HCT116 (cell line): ENCODE measurements at regions of chr17 and their contacts with region 1.

Region 1: GRCh38 chr17:50478391-50479381 is at the start of gene RSAD1:
- DNase-seq: peak; percentile 87
- ATAC-seq: peak; percentile 81
- H3K4me3 ChIP-seq: peak within 1 kb of the TSS; percentile 78 to 91
- H3K27ac ChIP-seq: peak within 1 kb of the TSS; percentile 77
- H3K4me1 ChIP-seq: peaks cover 21 to 42% of the 10 kb centered on the region in 2 experiments
- H3K27me3 ChIP-seq: no peaks in the 10 kb centered on the region
- CTCF ChIP-seq: peak; percentile 91 to 97 (median 95)
- POLR2A ChIP-seq: peak; percentile 82
- RAD21 ChIP-seq: peak; percentile 70
- total RNA-seq, gene RSAD1: 82.7 TPM

Region 2: DNA sequence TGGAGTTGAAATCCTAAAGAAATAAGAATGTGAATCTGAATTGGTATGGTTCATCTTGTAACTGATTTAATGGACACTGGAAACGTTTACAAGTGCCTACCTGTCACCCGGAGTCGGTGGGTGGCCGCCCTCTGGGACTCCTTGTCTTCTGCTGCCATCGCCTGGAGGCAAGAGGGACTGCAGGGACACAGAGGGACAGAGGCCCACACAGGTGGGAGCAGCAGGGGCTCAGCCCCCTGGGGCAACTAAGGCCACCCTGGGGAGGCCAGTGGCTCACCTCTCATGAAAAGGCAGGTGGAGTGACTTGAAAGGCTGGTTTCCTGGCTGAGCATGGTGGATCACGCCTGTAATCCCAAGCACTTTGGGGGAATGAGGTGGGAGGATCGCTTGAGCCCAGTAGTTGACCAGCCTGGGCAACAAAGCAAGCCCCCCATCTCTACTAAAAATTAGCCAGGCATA is 181.2 kb before region 1 on chr17:
- CTCF ChIA-PET with region 1: no interaction called
- POLR2A ChIA-PET with region 1: no interaction called
- RAD21 ChIA-PET with region 1: no interaction called
- intact Hi-C with region 1: loop called (anchors 2 kb)
- DNase-seq: peak; percentile 80
- ATAC-seq: peak; percentile 99
- H3K4me3 ChIP-seq: no peak overlapping the region
- H3K27ac ChIP-seq: no peak overlapping the region
- H3K4me1 ChIP-seq: no peaks in the 10 kb centered on the region
- H3K27me3 ChIP-seq: no peaks in the 10 kb centered on the region
- CTCF ChIP-seq: peak; percentile 74 to 99 (median 98)
- POLR2A ChIP-seq: no peak
- RAD21 ChIP-seq: peak; percentile 100

Region 3: DNA sequence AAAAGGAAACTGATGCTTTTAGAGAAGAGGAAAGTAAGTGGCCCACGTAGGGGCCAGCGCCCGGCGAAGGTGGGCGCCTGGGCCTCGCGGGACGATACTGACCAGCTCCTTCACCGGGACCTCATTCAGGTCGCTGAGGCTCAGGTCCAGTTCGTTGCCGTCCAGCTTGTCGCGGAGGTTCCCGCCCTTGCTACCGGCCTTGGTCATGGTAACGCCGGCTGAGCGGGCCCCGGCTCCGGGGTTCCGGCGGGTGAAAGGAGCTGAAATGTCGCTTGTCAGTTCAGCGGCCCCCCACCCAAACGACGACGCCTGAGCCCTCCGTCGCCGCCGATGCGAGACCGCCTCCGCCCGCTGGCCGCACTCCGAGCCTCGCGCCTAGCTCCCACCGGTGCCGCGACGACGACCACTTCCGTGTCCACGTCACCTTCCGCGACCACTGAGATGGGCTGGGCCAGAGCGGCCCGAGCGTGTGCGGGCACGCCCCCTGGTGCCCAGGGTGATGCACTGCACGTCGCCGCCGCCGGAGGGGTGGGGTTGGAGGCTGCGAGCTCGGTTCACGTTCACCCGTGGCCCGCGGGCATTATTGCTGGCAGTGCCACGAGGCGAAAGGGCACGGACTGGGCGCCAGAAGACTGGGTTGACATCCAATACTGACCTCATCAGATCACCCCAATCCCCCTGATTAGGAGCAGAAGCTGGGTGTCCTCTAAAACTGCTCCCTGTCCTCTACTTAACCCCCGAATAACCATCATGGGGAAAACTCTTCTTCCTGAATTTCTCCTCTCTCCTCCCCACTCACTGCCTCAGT is 81.4 kb before region 1 on chr17 and contains the start of gene LRRC59:
- CTCF ChIA-PET with region 1: interaction called, 15 read pairs
- POLR2A ChIA-PET with region 1: interaction called, 9 read pairs
- RAD21 ChIA-PET with region 1: interaction called in 1 of 2 experiments, 3 read pairs
- intact Hi-C with region 1: loop called (anchors 1 kb)
- DNase-seq: peak; percentile 77
- ATAC-seq: peak; percentile 95
- H3K4me3 ChIP-seq: peak within 1 kb of the TSS; percentile 95
- H3K27ac ChIP-seq: peak within 1 kb of the TSS; percentile 77
- H3K4me1 ChIP-seq: peaks cover 7 to 27% of the 10 kb centered on the region in 2 experiments
- H3K27me3 ChIP-seq: no peaks in the 10 kb centered on the region
- CTCF ChIP-seq: peak; percentile 83 to 99 (median 94)
- POLR2A ChIP-seq: peak; percentile 71
- RAD21 ChIP-seq: peak; percentile 39; the same call in 1 of the 2 replicates
- total RNA-seq, gene LRRC59: 221 TPM

Region 4: DNA sequence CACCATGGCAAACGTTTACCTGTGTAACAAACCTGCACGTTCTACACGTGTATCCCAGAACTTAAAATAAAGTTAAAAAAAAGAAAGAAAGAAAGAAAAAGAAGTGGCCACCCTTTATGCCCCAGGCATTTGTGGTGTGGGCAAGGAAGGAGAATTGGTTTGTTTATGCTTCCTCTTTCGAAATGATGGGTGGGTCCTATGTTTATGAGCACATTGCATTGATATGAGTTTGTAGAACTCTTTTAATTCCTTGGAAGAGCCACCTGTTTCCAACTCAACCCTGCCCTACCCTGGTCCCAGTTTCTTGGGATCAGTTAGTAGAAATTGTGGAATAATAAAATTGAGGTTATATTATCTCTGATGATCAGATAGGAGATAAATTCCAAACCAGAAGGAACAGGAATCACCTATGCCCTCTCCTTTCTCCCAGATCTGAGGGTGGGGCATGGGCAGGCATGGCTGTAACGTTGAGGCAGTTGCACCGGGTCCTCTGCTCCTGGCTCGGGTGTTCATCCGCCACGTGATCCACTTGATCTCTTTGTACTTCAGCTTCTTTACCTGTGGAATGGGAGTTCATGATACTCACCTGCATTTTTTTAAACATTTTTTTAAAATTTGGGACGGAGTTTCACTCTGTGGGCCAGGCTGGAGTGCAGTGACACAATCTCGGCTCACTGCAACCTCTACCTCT is 25.9 kb before region 1 on chr17:
- CTCF ChIA-PET with region 1: no interaction called
- POLR2A ChIA-PET with region 1: no interaction called
- RAD21 ChIA-PET with region 1: no interaction called
- intact Hi-C with region 1: no loop called
- DNase-seq: no peak
- ATAC-seq: no peak; the same call in 1 of the 2 replicates
- H3K4me3 ChIP-seq: no peak overlapping the region
- H3K27ac ChIP-seq: no peak overlapping the region
- H3K4me1 ChIP-seq: peaks cover 16 to 34% of the 10 kb centered on the region in 2 experiments
- H3K27me3 ChIP-seq: no peaks in the 10 kb centered on the region
- CTCF ChIP-seq: no peak
- POLR2A ChIP-seq: no peak
- RAD21 ChIP-seq: no peak

Region 5: GRCh38 chr17:50501054-50501453 is 22.4 kb after region 1 on chr17:
- CTCF ChIA-PET with region 1: interaction called, 10 read pairs
- POLR2A ChIA-PET with region 1: no interaction called
- RAD21 ChIA-PET with region 1: interaction called in 1 of 2 experiments, 4 read pairs
- intact Hi-C with region 1: no loop called
- DNase-seq: peak; percentile 50
- ATAC-seq: peak; percentile 31; the same call in 1 of the 2 replicates
- H3K4me3 ChIP-seq: no peak overlapping the region
- H3K27ac ChIP-seq: no peak overlapping the region
- H3K4me1 ChIP-seq: peaks cover 11 to 19% of the 10 kb centered on the region in 2 experiments
- H3K27me3 ChIP-seq: no peaks in the 10 kb centered on the region
- CTCF ChIP-seq: peak; percentile 54 to 73 (median 72); a peak in 5 of 6 replicates
- POLR2A ChIP-seq: no peak
- RAD21 ChIP-seq: peak; percentile 68

Region 6: DNA sequence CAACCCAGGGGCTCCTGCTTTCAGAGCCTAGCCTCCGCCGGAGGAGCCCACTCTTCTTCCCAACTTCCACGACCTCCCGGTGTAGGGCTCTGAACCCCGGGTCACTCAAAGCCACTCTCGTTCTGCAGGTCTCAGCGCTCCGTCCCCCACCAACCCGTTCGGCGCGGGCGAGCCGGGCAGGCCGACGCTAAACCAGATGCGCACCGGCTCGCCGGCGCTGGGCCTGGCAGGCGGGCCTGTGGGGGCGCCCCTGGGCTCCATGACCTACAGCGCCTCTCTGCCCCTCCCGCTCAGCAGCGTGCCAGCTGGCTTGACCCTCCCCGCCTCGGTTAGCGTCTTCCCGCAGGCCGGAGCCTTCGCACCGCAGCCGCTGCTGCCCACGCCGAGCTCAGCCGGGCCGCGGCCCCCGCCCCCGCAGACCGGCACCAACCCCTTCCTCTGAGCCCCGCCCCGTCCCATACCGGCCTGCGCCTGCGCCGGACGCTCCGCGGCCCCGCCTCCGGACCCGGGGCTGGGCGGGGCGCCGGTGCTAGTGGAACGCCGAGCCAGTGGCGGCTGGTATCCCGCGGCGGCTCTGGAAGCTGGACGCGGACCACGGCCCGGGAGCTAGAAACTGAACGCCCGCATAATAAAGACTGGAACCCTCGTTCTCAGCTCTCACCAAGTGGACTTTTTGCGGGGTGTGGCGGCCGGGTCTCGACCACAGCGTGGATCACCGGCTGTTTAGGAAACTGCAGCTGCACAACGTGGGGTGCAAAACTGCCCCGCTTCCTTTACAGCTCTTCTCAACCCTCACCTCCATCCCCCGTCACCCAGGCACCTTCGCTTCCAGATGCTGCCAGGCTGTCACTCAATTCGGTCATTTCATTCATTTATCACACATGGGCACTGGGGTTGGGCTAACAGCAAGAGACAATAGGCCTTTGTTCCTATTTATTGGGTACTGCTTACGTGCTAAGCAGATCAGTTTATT is 63.3 kb after region 1 on chr17:
- CTCF ChIA-PET with region 1: interaction called, 11 read pairs
- POLR2A ChIA-PET with region 1: interaction called, 12 read pairs
- RAD21 ChIA-PET with region 1: interaction called, 3 to 4 read pairs
- intact Hi-C with region 1: loop called (anchors 1 kb)
- DNase-seq: no peak
- ATAC-seq: peak; percentile 74
- H3K4me3 ChIP-seq: peak overlapping the region; percentile 68
- H3K27ac ChIP-seq: peak overlapping the region; percentile 71
- H3K4me1 ChIP-seq: peaks cover 40 to 66% of the 10 kb centered on the region in 2 experiments
- H3K27me3 ChIP-seq: no peaks in the 10 kb centered on the region
- CTCF ChIP-seq: peak in 2 of 3 experiments; percentile 34 to 41; a peak in 4 of 6 replicates
- POLR2A ChIP-seq: peak; percentile 94
- RAD21 ChIP-seq: no peak

Region 7: GRCh38 chr17:50596191-50597037 is 117.7 kb after region 1 on chr17:
- CTCF ChIA-PET with region 1: no interaction called
- POLR2A ChIA-PET with region 1: no interaction called
- RAD21 ChIA-PET with region 1: no interaction called
- intact Hi-C with region 1: no loop called
- DNase-seq: no peak
- ATAC-seq: no peak
- H3K4me3 ChIP-seq: no peak overlapping the region
- H3K27ac ChIP-seq: no peak overlapping the region
- H3K4me1 ChIP-seq: no peaks in the 10 kb centered on the region
- H3K27me3 ChIP-seq: no peaks in the 10 kb centered on the region
- CTCF ChIP-seq: no peak
- POLR2A ChIP-seq: no peak
- RAD21 ChIP-seq: no peak

Region 8: GRCh38 chr17:50626037-50626574 is 147.4 kb after region 1 on chr17:
- CTCF ChIA-PET with region 1: interaction called, 16 read pairs
- POLR2A ChIA-PET with region 1: no interaction called
- RAD21 ChIA-PET with region 1: interaction called, 3 to 4 read pairs
- intact Hi-C with region 1: loop called (anchors 1 kb)
- DNase-seq: peak; percentile 58
- ATAC-seq: peak; percentile 81
- H3K4me3 ChIP-seq: no peak overlapping the region
- H3K27ac ChIP-seq: peak overlapping the region; percentile 9; the same call in 1 of the 2 replicates
- H3K4me1 ChIP-seq: peaks cover 9 to 32% of the 10 kb centered on the region in 2 experiments; a peak in 3 of 4 replicates
- H3K27me3 ChIP-seq: no peaks in the 10 kb centered on the region
- CTCF ChIP-seq: peak; percentile 90 to 96 (median 92)
- POLR2A ChIP-seq: no peak
- RAD21 ChIP-seq: peak; percentile 92

Region 9: GRCh38 chr17:50949989-50950881 is 471.5 kb after region 1 on chr17:
- CTCF ChIA-PET with region 1: no interaction called
- POLR2A ChIA-PET with region 1: no interaction called
- RAD21 ChIA-PET with region 1: no interaction called
- intact Hi-C with region 1: loop called (anchors 2 kb)
- DNase-seq: peak; percentile 88
- ATAC-seq: peak; percentile 87
- H3K4me3 ChIP-seq: peak overlapping the region; percentile 29 to 42
- H3K27ac ChIP-seq: peak overlapping the region; percentile 79
- H3K4me1 ChIP-seq: peaks cover 74 to 97% of the 10 kb centered on the region in 2 experiments
- H3K27me3 ChIP-seq: no peaks in the 10 kb centered on the region
- CTCF ChIP-seq: peak; percentile 86 to 99 (median 97)
- POLR2A ChIP-seq: no peak
- RAD21 ChIP-seq: peak; percentile 100